B cell (primary cell): ENCODE measurements at regions of chr17 and their contacts with region 1.

Region 1: DNA sequence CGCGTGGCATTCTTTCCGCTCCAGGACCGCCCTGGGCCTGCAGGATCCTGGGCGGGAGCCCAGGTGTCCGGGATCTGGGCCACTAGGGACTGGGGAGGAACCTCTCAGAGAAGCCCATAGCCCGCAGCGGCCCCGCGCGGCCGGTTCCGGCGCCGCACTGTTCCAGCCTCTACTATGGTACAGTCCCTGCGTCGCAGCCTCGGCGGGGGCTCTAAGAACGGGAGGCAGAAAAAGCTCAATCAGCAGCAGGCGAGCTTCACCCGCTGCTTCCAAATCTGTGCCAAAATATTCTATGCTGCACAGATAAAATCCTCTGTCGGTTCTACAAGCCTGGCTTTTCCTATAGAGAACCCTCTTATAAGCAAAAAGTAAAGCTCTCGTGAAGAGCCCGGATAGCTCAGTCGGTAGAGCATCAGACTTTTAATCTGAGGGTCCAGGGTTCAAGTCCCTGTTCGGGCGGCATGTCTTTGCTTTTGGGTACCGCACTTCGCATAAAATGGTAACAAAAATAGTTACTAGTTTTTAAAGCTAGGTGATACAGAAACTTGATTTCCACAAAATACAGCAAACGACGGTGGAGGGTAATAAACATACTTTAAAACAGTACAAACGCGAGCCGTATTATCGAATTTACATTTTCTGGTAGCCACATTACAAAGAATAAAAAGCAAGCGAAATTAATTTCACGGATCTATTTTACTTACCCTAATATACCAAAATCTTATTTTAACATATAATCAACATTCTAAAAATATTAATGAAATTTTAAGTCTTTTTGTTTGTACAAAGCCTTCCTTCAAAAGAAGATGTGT is 661 bp upstream of the ALOXE3 start:
- DNase-seq: peak; percentile 92
- ATAC-seq: peak; percentile 68
- H3K4me3 ChIP-seq: peak overlapping the region; percentile 61 to 85 (median 69)
- H3K4me3 Mint-ChIP-seq: peak overlapping the region; percentile 94
- H3K27ac ChIP-seq: peak overlapping the region; percentile 13 to 34
- H3K27ac Mint-ChIP-seq: peak overlapping the region; percentile 98
- H3K4me1 ChIP-seq: peaks cover 53 to 61% of the 10 kb centered on the region in 2 donors
- H3K4me1 Mint-ChIP-seq: peaks cover 56% of the 10 kb centered on the region
- H3K27me3 ChIP-seq: peaks cover 0 to 73% (median 49%) of the 10 kb centered on the region in 4 experiments
- H3K27me3 Mint-ChIP-seq: peaks cover 57% of the 10 kb centered on the region
- CTCF ChIP-seq: peak; percentile 92

Region 2: DNA sequence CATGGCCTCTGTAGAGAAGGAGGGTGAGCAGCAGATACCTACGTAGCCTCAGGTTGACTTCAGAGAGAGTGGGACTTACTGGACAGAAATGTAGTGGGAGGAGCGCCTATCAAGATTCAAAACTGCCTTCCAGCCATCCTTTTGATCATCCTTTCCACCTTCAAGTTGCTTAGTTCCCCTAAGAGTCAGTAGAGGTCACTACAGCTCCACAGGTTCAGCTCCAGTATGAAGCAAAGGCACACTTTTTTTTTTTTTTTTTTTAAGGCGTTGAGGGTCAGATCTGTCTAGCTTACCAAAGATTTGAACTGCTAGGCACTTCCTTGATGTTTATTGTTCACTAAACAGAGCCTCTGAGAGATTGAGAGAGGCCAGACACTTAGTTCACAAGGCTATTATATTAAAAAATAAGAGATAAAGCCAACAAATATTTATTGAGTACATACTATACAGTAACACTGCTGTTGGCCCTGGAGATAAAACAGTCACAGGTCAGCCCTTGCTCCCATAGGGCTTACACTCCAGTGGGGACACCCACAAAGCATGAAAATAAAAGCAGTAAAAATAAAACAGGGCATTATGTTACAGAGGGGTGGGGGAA is 205.9 kb before region 1 on chr17:
- CTCF ChIA-PET with region 1: no interaction called
- POLR2A ChIA-PET with region 1: no interaction called
- intact Hi-C with region 1: no loop called
- DNase-seq: peak; percentile 83
- ATAC-seq: peak; percentile 28
- H3K4me3 ChIP-seq: no peak overlapping the region
- H3K4me3 Mint-ChIP-seq: peak overlapping the region; percentile 37
- H3K27ac ChIP-seq: no peak overlapping the region
- H3K27ac Mint-ChIP-seq: no peak overlapping the region
- H3K4me1 ChIP-seq: peaks cover 16 to 20% of the 10 kb centered on the region in 2 donors
- H3K4me1 Mint-ChIP-seq: peaks cover 24% of the 10 kb centered on the region
- H3K27me3 ChIP-seq: no peaks in the 10 kb centered on the region
- H3K27me3 Mint-ChIP-seq: no peaks in the 10 kb centered on the region
- CTCF ChIP-seq: peak; percentile 84

Region 3: DNA sequence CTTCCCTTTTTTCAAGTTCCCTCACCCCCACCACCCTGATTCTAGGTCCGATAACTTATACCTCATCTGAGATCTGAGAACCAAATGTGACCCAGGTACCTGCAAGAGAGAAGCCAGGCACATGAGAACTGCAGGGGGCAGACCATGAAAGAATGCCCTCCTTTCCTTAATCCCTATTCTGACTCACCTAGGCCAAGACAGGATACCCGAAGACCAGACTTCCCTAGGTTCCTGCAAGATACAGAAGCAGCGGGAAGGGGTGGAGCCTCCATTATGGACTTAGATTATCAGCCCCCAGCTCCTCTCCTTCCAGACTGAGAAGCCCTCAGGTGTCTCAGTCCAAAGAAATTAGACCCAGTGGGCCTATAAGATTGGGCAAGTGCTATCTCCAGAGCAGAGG is 191.4 kb before region 1 on chr17:
- CTCF ChIA-PET with region 1: no interaction called
- POLR2A ChIA-PET with region 1: no interaction called
- intact Hi-C with region 1: no loop called
- DNase-seq: no peak
- ATAC-seq: no peak
- H3K4me3 ChIP-seq: no peak overlapping the region
- H3K4me3 Mint-ChIP-seq: no peak overlapping the region
- H3K27ac ChIP-seq: no peak overlapping the region
- H3K27ac Mint-ChIP-seq: no peak overlapping the region
- H3K4me1 ChIP-seq: peaks cover 9 to 34% of the 10 kb centered on the region in 2 donors
- H3K4me1 Mint-ChIP-seq: peaks cover 37% of the 10 kb centered on the region
- H3K27me3 ChIP-seq: no peaks in the 10 kb centered on the region
- H3K27me3 Mint-ChIP-seq: no peaks in the 10 kb centered on the region
- CTCF ChIP-seq: no peak

Region 4: DNA sequence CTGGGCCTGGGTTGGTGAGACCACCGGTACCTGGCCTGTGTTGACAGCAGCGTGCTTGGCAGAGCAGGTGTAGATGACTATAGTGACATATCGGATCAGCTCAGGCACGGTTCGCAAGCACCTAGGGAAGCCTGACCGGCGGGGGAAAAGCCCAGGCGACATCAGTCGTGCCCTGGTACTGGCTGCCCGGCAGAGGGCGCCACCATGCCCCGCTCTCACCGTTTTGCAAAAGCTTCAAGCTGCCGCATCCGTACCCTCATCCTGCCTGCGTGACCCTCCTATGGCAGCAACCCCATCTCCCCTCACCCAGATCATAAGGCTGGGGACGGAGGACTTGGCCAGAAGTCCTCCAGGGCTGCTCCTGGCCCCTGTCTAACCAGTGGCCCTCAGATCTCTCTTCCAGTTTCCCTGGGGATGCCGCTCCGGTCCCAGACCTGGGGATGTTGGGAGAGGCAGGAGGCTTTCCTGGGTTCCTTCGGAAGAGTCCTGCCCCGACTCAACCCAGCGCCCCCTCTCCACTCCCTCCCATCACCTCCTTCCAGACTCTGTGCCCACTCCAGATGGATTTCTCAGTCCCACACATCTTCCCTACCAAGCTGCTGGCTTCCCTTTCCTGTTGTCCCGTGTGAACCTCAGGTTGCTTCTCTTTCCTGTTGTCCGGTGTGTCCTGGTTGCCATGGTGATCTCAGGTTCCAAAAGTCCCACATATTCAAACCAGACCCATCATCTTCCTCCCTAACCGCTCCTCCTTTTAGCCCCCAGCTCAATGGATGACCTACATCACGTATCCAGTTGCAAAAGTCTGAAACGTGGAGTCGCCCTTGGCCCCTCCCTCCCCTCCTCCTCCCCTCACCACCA is 45.1 kb before region 1 on chr17:
- CTCF ChIA-PET with region 1: interaction called, 360 read pairs
- POLR2A ChIA-PET with region 1: interaction called, 6 read pairs
- intact Hi-C with region 1: loop called (anchors 2 kb)
- DNase-seq: peak; percentile 95
- ATAC-seq: peak; percentile 95
- H3K4me3 ChIP-seq: peak overlapping the region in 1 of 5 experiments; percentile 34
- H3K4me3 Mint-ChIP-seq: peak overlapping the region; percentile 81
- H3K27ac ChIP-seq: no peak overlapping the region
- H3K27ac Mint-ChIP-seq: peak overlapping the region; percentile 57
- H3K4me1 ChIP-seq: peaks cover 28 to 29% of the 10 kb centered on the region in 2 donors
- H3K4me1 Mint-ChIP-seq: peaks cover 27% of the 10 kb centered on the region
- H3K27me3 ChIP-seq: peaks cover 0 to 57% (median 39%) of the 10 kb centered on the region in 4 experiments
- H3K27me3 Mint-ChIP-seq: peaks cover 46% of the 10 kb centered on the region
- CTCF ChIP-seq: peak; percentile 95

Region 5: GRCh38 chr17:8091033-8091687 is 27.8 kb before region 1 on chr17:
- CTCF ChIA-PET with region 1: interaction called, 62 read pairs
- POLR2A ChIA-PET with region 1: interaction called, 9 read pairs
- intact Hi-C with region 1: loop called (anchors 1 kb)
- DNase-seq: peak; percentile 90
- ATAC-seq: peak; percentile 90
- H3K4me3 ChIP-seq: peak overlapping the region in 3 of 5 experiments; percentile 4 to 47 (median 29)
- H3K4me3 Mint-ChIP-seq: peak overlapping the region; percentile 78
- H3K27ac ChIP-seq: peak overlapping the region in 1 of 2 donors; percentile 55
- H3K27ac Mint-ChIP-seq: peak overlapping the region; percentile 92
- H3K4me1 ChIP-seq: peaks cover 26 to 43% of the 10 kb centered on the region in 2 donors
- H3K4me1 Mint-ChIP-seq: peaks cover 35% of the 10 kb centered on the region
- H3K27me3 ChIP-seq: no peaks in the 10 kb centered on the region
- H3K27me3 Mint-ChIP-seq: peaks cover 12% of the 10 kb centered on the region
- CTCF ChIP-seq: no peak

Region 6: GRCh38 chr17:8138672-8139371 is 19.8 kb after region 1 on chr17:
- CTCF ChIA-PET with region 1: interaction called, 68 read pairs
- POLR2A ChIA-PET with region 1: interaction called, 14 read pairs
- intact Hi-C with region 1: loop called (anchors 1 kb)
- DNase-seq: peak; percentile 98
- ATAC-seq: peak; percentile 96
- H3K4me3 ChIP-seq: peak overlapping the region; percentile 62 to 84 (median 72)
- H3K4me3 Mint-ChIP-seq: no peak overlapping the region
- H3K27ac ChIP-seq: peak overlapping the region; percentile 84 to 98
- H3K27ac Mint-ChIP-seq: no peak overlapping the region
- H3K4me1 ChIP-seq: peaks cover 10 to 20% of the 10 kb centered on the region in 2 donors
- H3K4me1 Mint-ChIP-seq: peaks cover 2% of the 10 kb centered on the region
- H3K27me3 ChIP-seq: no peaks in the 10 kb centered on the region
- H3K27me3 Mint-ChIP-seq: no peaks in the 10 kb centered on the region
- CTCF ChIP-seq: peak; percentile 94

Region 7: DNA sequence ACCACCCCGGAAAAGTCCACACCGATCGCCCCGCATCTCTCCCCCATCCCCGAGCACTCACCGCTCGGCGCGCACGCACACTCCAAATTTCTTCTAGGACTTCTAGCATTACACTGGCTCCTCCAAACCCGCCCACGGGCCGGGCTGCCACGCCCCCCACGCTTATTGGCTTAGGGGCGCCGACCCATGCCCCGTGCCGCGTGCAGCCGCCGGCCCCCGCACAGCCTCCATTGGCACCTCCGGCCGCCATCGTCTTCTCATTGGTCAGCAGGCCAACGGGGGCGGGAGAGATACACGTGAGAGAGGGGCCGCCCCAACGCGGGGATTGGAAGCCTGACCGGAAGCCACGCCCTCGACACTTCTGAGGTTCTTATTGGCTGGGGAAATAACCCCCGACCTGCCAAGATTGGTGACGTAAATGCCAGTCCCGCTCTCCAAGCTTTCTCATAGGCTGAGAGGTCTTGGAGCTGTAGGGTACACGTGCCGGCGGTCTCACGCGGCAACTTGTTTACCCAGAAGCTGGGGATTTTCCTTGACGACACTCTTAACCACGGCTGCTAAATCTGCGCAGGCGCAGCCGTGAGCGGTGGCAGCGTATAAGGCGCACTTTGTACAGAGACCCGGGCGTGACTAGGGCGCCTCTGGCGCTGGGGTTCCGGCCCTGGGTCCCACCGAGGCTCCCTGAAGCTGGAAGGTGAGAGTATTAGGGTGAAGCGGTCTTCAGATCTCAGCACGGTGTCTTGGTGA is 37.4 kb after region 1 on chr17:
- CTCF ChIA-PET with region 1: interaction called, 44 read pairs
- POLR2A ChIA-PET with region 1: interaction called, 23 read pairs
- intact Hi-C with region 1: loop called (anchors 1 kb)
- DNase-seq: peak; percentile 100
- ATAC-seq: peak; percentile 79
- H3K4me3 ChIP-seq: peak overlapping the region; percentile 69 to 96 (median 84)
- H3K4me3 Mint-ChIP-seq: no peak overlapping the region
- H3K27ac ChIP-seq: peak overlapping the region; percentile 98 to 100
- H3K27ac Mint-ChIP-seq: no peak overlapping the region
- H3K4me1 ChIP-seq: peaks cover 59 to 85% of the 10 kb centered on the region in 2 donors
- H3K4me1 Mint-ChIP-seq: peaks cover 50% of the 10 kb centered on the region
- H3K27me3 ChIP-seq: no peaks in the 10 kb centered on the region
- H3K27me3 Mint-ChIP-seq: no peaks in the 10 kb centered on the region
- CTCF ChIP-seq: no peak

Region 8: DNA sequence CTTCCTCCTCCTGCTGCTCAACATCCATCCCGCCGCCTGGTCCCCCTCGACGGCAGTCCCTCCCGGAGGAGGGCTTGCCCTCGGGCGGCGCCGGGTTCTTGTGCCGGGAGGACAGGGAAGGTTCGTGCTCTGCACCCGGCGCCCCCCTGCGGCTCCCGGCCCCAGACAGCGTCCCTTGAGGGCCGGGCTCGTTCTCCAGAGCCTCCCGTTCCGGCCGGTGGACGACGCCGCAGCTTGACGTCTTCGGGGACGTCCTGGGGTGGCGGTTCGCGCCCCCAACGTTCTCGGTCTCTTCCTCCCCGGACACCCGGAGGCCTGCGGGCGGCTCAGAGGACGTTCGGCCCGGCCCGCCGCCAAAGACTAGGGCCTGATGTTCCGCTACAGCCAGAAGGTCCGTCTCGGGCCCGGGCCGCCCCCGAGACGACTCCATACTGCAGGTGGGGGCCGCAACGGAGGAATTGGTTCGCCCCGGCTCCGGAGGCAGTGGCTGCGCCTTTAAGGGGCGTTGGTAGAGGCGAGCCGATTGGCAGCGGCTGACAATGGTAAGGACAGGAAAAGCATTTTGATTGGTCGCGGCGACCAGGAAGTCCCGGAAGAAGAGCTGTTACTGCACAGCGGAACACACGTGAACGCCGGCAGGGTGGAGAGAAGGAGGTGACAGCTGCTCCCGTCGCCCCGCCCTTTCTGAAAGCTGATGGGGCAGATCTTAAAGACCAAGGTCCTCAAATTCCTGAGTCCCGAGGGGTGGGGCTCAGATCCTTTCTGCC is 70.9 kb after region 1 on chr17 and contains the start of gene BORCS6:
- CTCF ChIA-PET with region 1: interaction called, 45 read pairs
- POLR2A ChIA-PET with region 1: interaction called, 18 read pairs
- intact Hi-C with region 1: loop called (anchors 1 kb)
- DNase-seq: peak; percentile 97
- ATAC-seq: peak; percentile 64
- H3K4me3 ChIP-seq: peak within 1 kb of the TSS; percentile 27 to 97 (median 74)
- H3K4me3 Mint-ChIP-seq: no peak within 1 kb of the TSS
- H3K27ac ChIP-seq: peak within 1 kb of the TSS; percentile 89 to 93
- H3K27ac Mint-ChIP-seq: no peak within 1 kb of the TSS
- H3K4me1 ChIP-seq: peaks cover 36 to 53% of the 10 kb centered on the region in 2 donors
- H3K4me1 Mint-ChIP-seq: peaks cover 11% of the 10 kb centered on the region
- H3K27me3 ChIP-seq: no peaks in the 10 kb centered on the region
- H3K27me3 Mint-ChIP-seq: no peaks in the 10 kb centered on the region
- CTCF ChIP-seq: no peak
- total RNA-seq, gene BORCS6: 18.6 and 20.2 TPM in 2 replicates

Region 9: GRCh38 chr17:8300627-8301242 is 181.8 kb after region 1 on chr17:
- CTCF ChIA-PET with region 1: interaction called, 9 read pairs
- POLR2A ChIA-PET with region 1: no interaction called
- intact Hi-C with region 1: loop called (anchors 2 kb)
- DNase-seq: peak; percentile 84
- ATAC-seq: peak; percentile 95
- H3K4me3 ChIP-seq: no peak overlapping the region
- H3K4me3 Mint-ChIP-seq: no peak overlapping the region
- H3K27ac ChIP-seq: peak overlapping the region in 1 of 2 donors; percentile 1
- H3K27ac Mint-ChIP-seq: peak overlapping the region; percentile 7
- H3K4me1 ChIP-seq: peaks cover 3 to 4% of the 10 kb centered on the region in 2 donors
- H3K4me1 Mint-ChIP-seq: peaks cover 8% of the 10 kb centered on the region
- H3K27me3 ChIP-seq: no peaks in the 10 kb centered on the region
- H3K27me3 Mint-ChIP-seq: no peaks in the 10 kb centered on the region
- CTCF ChIP-seq: peak; percentile 81